B cell (primary cell): ENCODE measurements at regions of chr13 and their contacts with region 1.

Region 1: DNA sequence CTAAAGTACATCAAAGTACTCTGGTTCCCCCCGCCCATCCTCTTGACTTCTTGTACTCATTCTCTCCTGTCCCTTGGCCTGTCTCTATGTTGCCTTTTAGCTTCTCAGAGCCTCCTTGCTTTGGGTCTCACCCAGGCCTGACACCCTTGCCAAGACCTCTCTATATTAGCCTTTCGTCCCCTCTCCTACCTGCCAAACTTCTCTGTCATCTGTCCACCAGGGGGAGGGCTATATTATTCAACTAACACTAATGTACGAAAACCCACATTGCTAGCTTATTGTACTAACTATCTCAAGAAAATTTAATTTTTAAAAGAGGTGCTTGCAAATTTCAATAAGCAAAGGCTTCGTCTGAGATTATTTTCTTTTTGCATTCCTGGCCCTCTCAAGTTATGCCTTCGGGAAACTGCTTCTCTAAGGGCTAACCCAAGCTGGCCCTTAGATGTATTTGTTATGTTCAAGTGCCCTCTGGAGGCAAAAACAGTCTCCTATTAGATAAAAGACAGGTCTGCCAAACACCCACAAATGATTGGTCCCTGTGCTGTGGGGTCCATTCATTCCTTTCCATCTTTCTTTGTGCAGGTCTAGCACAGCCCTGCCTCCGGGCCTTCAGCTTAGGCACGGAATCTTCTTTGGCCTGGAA is 6.3 kb upstream of the MRPS31 start:
- DNase-seq: peak; percentile 82
- ATAC-seq: peak; percentile 83
- H3K4me3 ChIP-seq: peak overlapping the region; percentile 16 to 61 (median 47)
- H3K4me3 Mint-ChIP-seq: peak overlapping the region; percentile 69
- H3K27ac ChIP-seq: peak overlapping the region; percentile 14 to 60
- H3K27ac Mint-ChIP-seq: peak overlapping the region; percentile 86
- H3K4me1 ChIP-seq: peaks cover 11 to 29% of the 10 kb centered on the region in 2 donors
- H3K4me1 Mint-ChIP-seq: peaks cover 24% of the 10 kb centered on the region
- H3K27me3 ChIP-seq: no peaks in the 10 kb centered on the region
- H3K27me3 Mint-ChIP-seq: no peaks in the 10 kb centered on the region
- CTCF ChIP-seq: peak; percentile 93

Region 2: GRCh38 chr13:39777527-39778061 is 999.7 kb before region 1 on chr13:
- CTCF ChIA-PET with region 1: no interaction called
- POLR2A ChIA-PET with region 1: no interaction called
- intact Hi-C with region 1: loop called (anchors 2 kb)
- DNase-seq: no peak
- ATAC-seq: no peak
- H3K4me3 ChIP-seq: no peak overlapping the region
- H3K4me3 Mint-ChIP-seq: no peak overlapping the region
- H3K27ac ChIP-seq: no peak overlapping the region
- H3K27ac Mint-ChIP-seq: no peak overlapping the region
- H3K4me1 ChIP-seq: no peaks in the 10 kb centered on the region
- H3K4me1 Mint-ChIP-seq: no peaks in the 10 kb centered on the region
- H3K27me3 ChIP-seq: no peaks in the 10 kb centered on the region
- H3K27me3 Mint-ChIP-seq: no peaks in the 10 kb centered on the region
- CTCF ChIP-seq: no peak

Region 3: DNA sequence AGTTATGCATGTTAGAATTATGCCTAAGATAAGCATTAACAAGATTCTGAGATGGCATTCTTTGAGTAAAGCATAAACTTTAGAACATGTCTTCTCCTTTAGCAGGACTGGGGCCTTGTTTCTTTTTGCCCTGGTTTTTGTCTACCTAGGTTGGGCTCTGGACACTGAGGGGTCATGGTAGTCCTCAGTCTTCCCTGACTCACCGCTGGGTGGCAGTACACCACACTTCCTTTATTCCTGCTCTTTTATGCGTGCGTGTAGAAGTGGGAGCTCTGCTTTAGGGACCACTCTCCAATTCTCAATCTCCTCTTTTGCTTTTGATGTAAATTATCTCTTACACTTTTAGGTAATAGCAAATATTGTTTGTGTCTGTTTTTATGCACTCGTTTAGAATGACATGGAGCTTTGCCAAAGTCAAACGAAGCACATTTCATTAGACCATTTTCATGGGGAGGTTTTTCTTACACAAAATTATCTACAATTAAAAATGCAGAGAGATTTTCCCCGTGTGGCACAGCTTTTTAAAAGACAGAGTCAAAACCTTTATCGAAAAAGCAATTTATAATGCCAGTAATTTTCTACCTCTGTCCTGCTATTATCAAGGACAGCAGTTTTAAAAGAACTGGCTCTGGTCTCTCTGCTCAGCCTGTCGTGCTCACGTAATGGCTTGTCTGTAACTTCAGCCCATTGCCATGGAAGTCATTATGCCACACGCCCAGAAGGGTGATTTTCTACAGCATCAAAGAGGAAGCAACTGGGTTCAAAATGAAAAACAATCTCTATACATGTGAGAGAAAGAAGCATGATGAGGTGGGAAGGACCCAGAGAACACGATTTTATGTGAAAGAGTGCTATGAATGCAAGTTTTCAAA is 707.9 kb before region 1 on chr13:
- CTCF ChIA-PET with region 1: interaction called, 17 read pairs
- POLR2A ChIA-PET with region 1: no interaction called
- intact Hi-C with region 1: loop called (anchors 1 kb)
- DNase-seq: peak; percentile 79
- ATAC-seq: peak; percentile 95
- H3K4me3 ChIP-seq: no peak overlapping the region
- H3K4me3 Mint-ChIP-seq: no peak overlapping the region
- H3K27ac ChIP-seq: no peak overlapping the region
- H3K27ac Mint-ChIP-seq: no peak overlapping the region
- H3K4me1 ChIP-seq: peaks cover 10 to 13% of the 10 kb centered on the region in 2 donors
- H3K4me1 Mint-ChIP-seq: peaks cover 11% of the 10 kb centered on the region
- H3K27me3 ChIP-seq: no peaks in the 10 kb centered on the region
- H3K27me3 Mint-ChIP-seq: no peaks in the 10 kb centered on the region
- CTCF ChIP-seq: peak; percentile 82

Region 4: GRCh38 chr13:40764587-40765403 is 12.5 kb before region 1 on chr13:
- CTCF ChIA-PET with region 1: interaction called, 14 read pairs
- POLR2A ChIA-PET with region 1: no interaction called
- intact Hi-C with region 1: no loop called
- DNase-seq: no peak
- ATAC-seq: no peak
- H3K4me3 ChIP-seq: no peak overlapping the region
- H3K4me3 Mint-ChIP-seq: no peak overlapping the region
- H3K27ac ChIP-seq: no peak overlapping the region
- H3K27ac Mint-ChIP-seq: no peak overlapping the region
- H3K4me1 ChIP-seq: peaks cover 2 to 5% of the 10 kb centered on the region in 2 donors
- H3K4me1 Mint-ChIP-seq: peaks cover 5% of the 10 kb centered on the region
- H3K27me3 ChIP-seq: no peaks in the 10 kb centered on the region
- H3K27me3 Mint-ChIP-seq: no peaks in the 10 kb centered on the region
- CTCF ChIP-seq: no peak

Region 5: GRCh38 chr13:40798380-40798779 is 21.1 kb after region 1 on chr13:
- CTCF ChIA-PET with region 1: interaction called, 13 read pairs
- POLR2A ChIA-PET with region 1: no interaction called
- intact Hi-C with region 1: no loop called
- DNase-seq: no peak
- ATAC-seq: no peak
- H3K4me3 ChIP-seq: peak overlapping the region in 1 of 5 experiments; percentile 13
- H3K4me3 Mint-ChIP-seq: peak overlapping the region; percentile 45
- H3K27ac ChIP-seq: no peak overlapping the region
- H3K27ac Mint-ChIP-seq: peak overlapping the region; percentile 32
- H3K4me1 ChIP-seq: no peaks in the 10 kb centered on the region
- H3K4me1 Mint-ChIP-seq: no peaks in the 10 kb centered on the region
- H3K27me3 ChIP-seq: no peaks in the 10 kb centered on the region
- H3K27me3 Mint-ChIP-seq: no peaks in the 10 kb centered on the region
- CTCF ChIP-seq: no peak

Region 6: DNA sequence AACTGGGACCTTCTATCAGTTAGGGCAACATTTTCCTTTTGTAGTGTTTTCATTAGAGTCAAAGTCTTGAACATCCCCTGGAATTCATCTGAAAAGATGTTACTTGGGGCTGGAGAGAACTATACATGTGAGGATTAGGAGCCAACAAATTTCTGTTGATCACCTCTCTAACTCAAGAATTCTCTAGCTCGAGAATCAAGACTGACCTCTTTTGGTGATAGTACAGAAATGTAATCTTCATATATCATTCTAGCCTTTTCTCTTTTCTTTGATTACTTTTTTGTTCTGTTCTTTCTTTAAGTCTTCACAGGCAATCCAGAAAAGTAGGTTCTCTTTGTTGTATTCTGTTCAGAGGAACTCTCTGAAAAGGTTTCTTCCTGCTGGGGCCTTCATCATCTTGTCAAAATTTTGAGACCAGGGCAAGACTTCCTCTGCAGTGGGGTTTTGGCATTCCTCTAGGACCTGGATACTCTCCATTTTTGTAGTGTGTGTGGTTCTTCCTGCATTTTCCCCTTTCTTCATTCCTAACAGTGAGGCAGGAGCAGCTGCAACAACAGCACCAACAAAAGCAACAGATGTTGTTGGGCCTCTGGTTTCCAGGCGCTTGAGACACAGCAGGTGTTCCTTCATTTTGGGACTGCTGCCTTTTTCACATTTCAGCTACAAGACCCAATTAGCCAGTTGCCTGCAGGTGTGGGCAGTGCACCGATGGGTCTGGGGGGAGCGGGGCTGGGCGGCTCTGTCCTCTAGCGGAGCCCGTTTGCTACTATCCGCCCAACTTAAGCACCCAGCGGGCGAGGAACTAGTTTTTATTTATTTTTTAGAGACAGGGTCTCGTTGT is 215.6 kb after region 1 on chr13:
- CTCF ChIA-PET with region 1: interaction called, 20 read pairs
- POLR2A ChIA-PET with region 1: no interaction called
- intact Hi-C with region 1: no loop called
- DNase-seq: peak; percentile 43
- ATAC-seq: no peak
- H3K4me3 ChIP-seq: no peak overlapping the region
- H3K4me3 Mint-ChIP-seq: peak overlapping the region; percentile 43
- H3K27ac ChIP-seq: peak overlapping the region; percentile 36 to 70
- H3K27ac Mint-ChIP-seq: peak overlapping the region; percentile 78
- H3K4me1 ChIP-seq: peaks cover 60 to 83% of the 10 kb centered on the region in 2 donors
- H3K4me1 Mint-ChIP-seq: peaks cover 75% of the 10 kb centered on the region
- H3K27me3 ChIP-seq: no peaks in the 10 kb centered on the region
- H3K27me3 Mint-ChIP-seq: no peaks in the 10 kb centered on the region
- CTCF ChIP-seq: peak; percentile 16

Region 7: GRCh38 chr13:42328672-42329071 is 1551.4 kb after region 1 on chr13:
- CTCF ChIA-PET with region 1: no interaction called
- POLR2A ChIA-PET with region 1: no interaction called
- intact Hi-C with region 1: no loop called
- DNase-seq: no peak
- ATAC-seq: no peak
- H3K4me3 ChIP-seq: no peak overlapping the region
- H3K4me3 Mint-ChIP-seq: peak overlapping the region; percentile 2
- H3K27ac ChIP-seq: no peak overlapping the region
- H3K27ac Mint-ChIP-seq: no peak overlapping the region
- H3K4me1 ChIP-seq: peaks cover 11 to 12% of the 10 kb centered on the region in 2 donors
- H3K4me1 Mint-ChIP-seq: peaks cover 16% of the 10 kb centered on the region
- H3K27me3 ChIP-seq: no peaks in the 10 kb centered on the region
- H3K27me3 Mint-ChIP-seq: no peaks in the 10 kb centered on the region
- CTCF ChIP-seq: no peak